Right ventricle myocardium superior (tissue), 1 donor: ENCODE measurements at regions of chr14 and their contacts with region 1.

Region 1: DNA sequence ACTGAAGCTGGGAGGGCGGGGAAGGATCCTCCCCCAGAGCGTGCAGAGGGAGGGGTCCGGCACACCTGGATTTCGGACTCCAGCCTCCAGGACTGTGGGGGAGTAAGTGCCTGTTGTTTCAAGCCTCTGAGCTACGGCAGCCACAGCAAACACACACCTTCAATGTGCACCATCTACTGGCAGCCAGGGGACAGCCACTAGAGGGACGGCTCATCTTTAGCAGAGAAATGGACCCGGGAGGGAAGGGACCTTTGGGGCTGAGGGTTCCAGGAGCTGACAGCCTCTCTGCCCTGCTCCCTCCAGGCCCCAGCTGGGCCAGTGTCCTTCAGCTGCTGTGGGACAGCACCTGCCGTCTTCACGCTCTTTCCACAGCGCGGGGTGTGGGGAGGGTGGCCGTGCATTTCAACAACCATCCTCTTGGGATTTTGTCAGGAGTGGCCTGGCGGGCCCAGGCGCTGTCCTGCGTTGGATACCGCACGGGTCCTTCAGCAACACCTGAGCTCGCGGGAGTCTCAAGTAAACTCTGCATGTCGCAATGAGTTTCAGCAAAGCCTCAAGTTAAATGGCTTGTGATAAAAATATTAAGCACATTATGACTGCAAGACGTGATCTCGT is 209.2 kb upstream of the C14orf180 start:
- DNase-seq: peak; percentile 38
- ATAC-seq: peak; percentile 67

Region 2: GRCh38 chr14:104149617-104150135 is 220.7 kb before region 1 on chr14:
- intact Hi-C with region 1: loop called (anchors 10 kb)
- DNase-seq: peak; percentile 59
- ATAC-seq: peak; percentile 41

Region 3: DNA sequence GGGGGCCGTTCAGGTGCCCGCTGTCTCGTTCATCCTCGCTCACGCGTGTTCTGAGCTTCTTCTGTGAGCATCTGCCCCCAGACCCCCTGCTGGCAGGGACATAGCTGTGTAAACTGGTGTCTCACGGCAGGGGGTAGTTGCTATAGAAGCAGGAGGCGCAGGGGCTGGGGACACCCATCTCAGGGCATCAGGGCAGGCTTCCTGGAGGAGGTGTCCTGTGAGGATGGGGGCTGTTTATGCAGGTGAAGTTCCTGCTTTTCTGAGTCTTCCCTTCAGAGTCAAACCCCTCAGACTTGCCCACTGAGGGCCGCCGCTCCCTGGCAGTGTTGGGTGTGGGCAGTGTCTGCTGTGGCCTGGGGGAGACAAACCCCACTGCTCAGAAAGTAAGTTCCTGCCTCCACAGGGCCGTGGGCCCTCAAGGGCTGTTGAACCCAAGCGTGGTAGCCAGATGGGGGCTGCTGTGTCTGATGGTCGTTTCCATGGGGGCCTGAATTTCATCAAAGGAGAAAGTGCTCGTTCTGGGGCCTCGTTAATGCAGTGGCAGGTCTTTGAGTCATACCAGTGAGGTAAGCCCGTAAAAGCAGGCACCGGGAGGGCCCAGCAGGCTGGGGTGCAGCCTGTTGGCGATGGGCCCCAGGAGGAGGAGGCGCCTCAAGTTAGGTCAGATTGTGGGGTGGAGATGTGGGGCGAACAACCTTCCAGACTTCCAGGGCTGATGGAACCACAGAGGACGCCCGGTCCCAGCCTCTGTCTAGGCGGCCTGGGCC is 208.6 kb before region 1 on chr14:
- intact Hi-C with region 1: no loop called
- DNase-seq: no peak
- ATAC-seq: no peak

Region 4: GRCh38 chr14:104554608-104555429 is 184.5 kb after region 1 on chr14:
- intact Hi-C with region 1: loop called (anchors 10 kb)
- DNase-seq: no peak
- ATAC-seq: no peak